ENCODE measurements at regions of chr11 and their contacts with region 1.

Region 1: GRCh38 chr11:122754553-122755322 is 83.6 kb upstream of the CRTAM start:
- DNase-seq: peak in 7 of 9 donors; percentile 27 to 63 (median 54)
- ATAC-seq: peak; percentile 57
- H3K4me3 ChIP-seq: no peak overlapping the region
- H3K4me3 Mint-ChIP-seq: peak overlapping the region in 6 of 10 donors; percentile 0 to 38 (median 26)
- H3K27ac ChIP-seq: no peak overlapping the region
- H3K27ac Mint-ChIP-seq: peak overlapping the region in 5 of 9 donors; percentile 43 to 79 (median 60)
- H3K4me1 ChIP-seq: peaks cover 11 to 27% of the 10 kb centered on the region in 2 donors
- H3K4me1 Mint-ChIP-seq: peaks cover 23 to 87% (median 68%) of the 10 kb centered on the region in 7 donors
- H3K27me3 ChIP-seq: no peaks in the 10 kb centered on the region
- H3K27me3 Mint-ChIP-seq: peaks cover 0 to 11% (median 0%) of the 10 kb centered on the region in 5 donors

Region 2: DNA sequence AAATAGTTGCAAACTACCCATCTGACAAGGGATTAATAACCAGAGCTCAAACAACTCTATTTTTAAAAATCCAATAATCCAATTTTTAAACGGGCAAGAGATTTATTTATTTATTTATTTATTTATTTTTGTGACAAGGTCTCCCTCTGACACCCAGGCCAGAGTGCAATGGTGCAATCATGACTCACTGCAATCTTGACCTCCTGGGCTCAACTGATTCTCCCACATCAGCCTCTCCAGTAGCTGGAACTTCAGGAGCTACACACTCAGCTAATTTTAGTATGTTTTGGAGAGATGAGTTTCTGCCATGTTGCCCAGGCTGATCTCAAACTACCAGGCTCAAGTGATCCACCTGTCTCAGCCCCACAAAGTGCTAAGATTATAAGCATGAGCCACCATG is 371.6 kb before region 1 on chr11:
- CTCF ChIA-PET with region 1: no interaction called
- POLR2A ChIA-PET with region 1: no interaction called
- intact Hi-C with region 1: no loop called
- DNase-seq: no peak
- ATAC-seq: no peak
- H3K4me3 ChIP-seq: no peak overlapping the region
- H3K4me3 Mint-ChIP-seq: no peak overlapping the region
- H3K27ac ChIP-seq: no peak overlapping the region
- H3K27ac Mint-ChIP-seq: no peak overlapping the region
- H3K4me1 ChIP-seq: no peaks in the 10 kb centered on the region
- H3K4me1 Mint-ChIP-seq: peaks cover 0 to 2% (median 0%) of the 10 kb centered on the region in 7 donors
- H3K27me3 ChIP-seq: no peaks in the 10 kb centered on the region
- H3K27me3 Mint-ChIP-seq: peaks cover 0 to 4% (median 0%) of the 10 kb centered on the region in 5 donors

Region 3: GRCh38 chr11:122578168-122578825 is 176.4 kb before region 1 on chr11:
- CTCF ChIA-PET with region 1: interaction called, 4 read pairs
- POLR2A ChIA-PET with region 1: interaction called, 3 read pairs
- intact Hi-C with region 1: loop called (anchors 1 kb)
- DNase-seq: no peak
- ATAC-seq: no peak
- H3K4me3 ChIP-seq: no peak overlapping the region
- H3K4me3 Mint-ChIP-seq: no peak overlapping the region
- H3K27ac ChIP-seq: no peak overlapping the region
- H3K27ac Mint-ChIP-seq: no peak overlapping the region
- H3K4me1 ChIP-seq: no peaks in the 10 kb centered on the region
- H3K4me1 Mint-ChIP-seq: peaks cover 5 to 17% (median 11%) of the 10 kb centered on the region in 7 donors
- H3K27me3 ChIP-seq: no peaks in the 10 kb centered on the region
- H3K27me3 Mint-ChIP-seq: peaks cover 0 to 7% (median 0%) of the 10 kb centered on the region in 5 donors

Region 4: DNA sequence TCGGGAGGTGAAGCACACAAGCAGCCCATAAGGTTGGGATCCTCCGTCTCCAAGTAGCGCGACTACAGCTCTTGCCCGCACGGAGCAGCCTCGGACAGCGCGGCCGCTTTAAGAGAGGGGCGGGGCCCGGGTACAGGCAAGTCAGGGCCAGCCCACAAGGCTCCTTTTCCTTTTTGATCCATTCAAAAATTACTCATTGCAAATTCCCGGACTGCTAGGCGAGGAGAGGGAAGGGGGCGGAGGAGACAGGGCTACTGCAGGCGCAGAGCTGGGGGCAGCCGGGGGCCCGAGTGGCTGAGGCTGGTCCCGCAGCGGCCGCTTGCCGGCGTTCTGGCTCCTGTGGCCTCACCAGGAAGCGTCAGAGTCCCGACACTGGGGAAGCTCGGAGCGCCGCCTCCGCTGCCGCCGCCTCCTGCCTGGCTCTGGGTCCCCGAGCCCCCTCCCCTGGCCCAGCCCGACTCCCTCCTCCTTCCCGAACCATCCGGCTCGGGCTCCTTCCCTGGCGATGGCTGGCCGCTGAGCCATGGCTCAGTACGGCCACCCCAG is 99.1 kb before region 1 on chr11 and contains the start of gene UBASH3B:
- CTCF ChIA-PET with region 1: interaction called, 80 read pairs
- POLR2A ChIA-PET with region 1: interaction called, 34 read pairs
- intact Hi-C with region 1: loop called (anchors 1 kb)
- DNase-seq: peak; percentile 49 to 65 (median 62)
- ATAC-seq: peak; percentile 82
- H3K4me3 ChIP-seq: peak within 1 kb of the TSS; percentile 68
- H3K4me3 Mint-ChIP-seq: peak within 1 kb of the TSS; percentile 91 to 99 (median 98)
- H3K27ac ChIP-seq: peak within 1 kb of the TSS; percentile 83
- H3K27ac Mint-ChIP-seq: peak within 1 kb of the TSS; percentile 73 to 97 (median 94)
- H3K4me1 ChIP-seq: peaks cover 4 to 29% of the 10 kb centered on the region in 2 donors
- H3K4me1 Mint-ChIP-seq: peaks cover 18 to 50% (median 43%) of the 10 kb centered on the region in 7 donors
- H3K27me3 ChIP-seq: no peaks in the 10 kb centered on the region
- H3K27me3 Mint-ChIP-seq: peaks cover 0 to 60% (median 0%) of the 10 kb centered on the region in 5 donors
- total RNA-seq, gene UBASH3B: 10.4 to 49.8 (median 43.2) TPM

Region 5: GRCh38 chr11:122668562-122669090 is 86.1 kb before region 1 on chr11:
- CTCF ChIA-PET with region 1: interaction called, 29 read pairs
- POLR2A ChIA-PET with region 1: interaction called, 19 read pairs
- intact Hi-C with region 1: loop called in 1 of 2 experiments (anchors 1 kb)
- DNase-seq: peak in 6 of 9 donors; percentile 22 to 68 (median 52)
- ATAC-seq: peak; percentile 47
- H3K4me3 ChIP-seq: no peak overlapping the region
- H3K4me3 Mint-ChIP-seq: peak overlapping the region; percentile 9 to 77 (median 62)
- H3K27ac ChIP-seq: peak overlapping the region; percentile 55
- H3K27ac Mint-ChIP-seq: peak overlapping the region in 8 of 9 donors; percentile 79 to 99 (median 90)
- H3K4me1 ChIP-seq: peaks cover 45 to 53% of the 10 kb centered on the region in 2 donors
- H3K4me1 Mint-ChIP-seq: peaks cover 36 to 91% (median 77%) of the 10 kb centered on the region in 7 donors
- H3K27me3 ChIP-seq: no peaks in the 10 kb centered on the region
- H3K27me3 Mint-ChIP-seq: peaks cover 0 to 9% (median 0%) of the 10 kb centered on the region in 5 donors

Region 6: GRCh38 chr11:122697636-122698167 is 57.0 kb before region 1 on chr11:
- CTCF ChIA-PET with region 1: interaction called, 32 read pairs
- POLR2A ChIA-PET with region 1: interaction called, 99 read pairs
- intact Hi-C with region 1: loop called (anchors 1 to 2 kb)
- DNase-seq: peak in 7 of 9 donors; percentile 53 to 78 (median 69)
- ATAC-seq: peak; percentile 85
- H3K4me3 ChIP-seq: peak overlapping the region; percentile 33
- H3K4me3 Mint-ChIP-seq: peak overlapping the region; percentile 61 to 93 (median 82)
- H3K27ac ChIP-seq: peak overlapping the region; percentile 75
- H3K27ac Mint-ChIP-seq: peak overlapping the region; percentile 88 to 99 (median 96)
- H3K4me1 ChIP-seq: peaks cover 34 to 62% of the 10 kb centered on the region in 2 donors
- H3K4me1 Mint-ChIP-seq: peaks cover 53 to 99% (median 88%) of the 10 kb centered on the region in 7 donors
- H3K27me3 ChIP-seq: no peaks in the 10 kb centered on the region
- H3K27me3 Mint-ChIP-seq: peaks cover 0 to 3% (median 0%) of the 10 kb centered on the region in 5 donors

Region 7: GRCh38 chr11:122727101-122727929 is 27.4 kb before region 1 on chr11:
- CTCF ChIA-PET with region 1: interaction called, 15 read pairs
- POLR2A ChIA-PET with region 1: interaction called, 3 read pairs
- intact Hi-C with region 1: loop called in 1 of 2 experiments (anchors 1 kb)
- DNase-seq: peak in 7 of 9 donors; percentile 33 to 56 (median 48)
- ATAC-seq: peak; percentile 77
- H3K4me3 ChIP-seq: peak overlapping the region; percentile 37
- H3K4me3 Mint-ChIP-seq: peak overlapping the region; percentile 79 to 95 (median 85)
- H3K27ac ChIP-seq: peak overlapping the region; percentile 81
- H3K27ac Mint-ChIP-seq: peak overlapping the region; percentile 88 to 100 (median 97)
- H3K4me1 ChIP-seq: peaks cover 20 to 64% of the 10 kb centered on the region in 2 donors
- H3K4me1 Mint-ChIP-seq: peaks cover 53 to 73% (median 66%) of the 10 kb centered on the region in 7 donors
- H3K27me3 ChIP-seq: no peaks in the 10 kb centered on the region
- H3K27me3 Mint-ChIP-seq: no peaks in the 10 kb centered on the region

Region 8: GRCh38 chr11:122772945-122773344 is 18.2 kb after region 1 on chr11:
- CTCF ChIA-PET with region 1: interaction called, 15 read pairs
- POLR2A ChIA-PET with region 1: interaction called, 4 read pairs
- intact Hi-C with region 1: no loop called
- DNase-seq: no peak
- ATAC-seq: no peak
- H3K4me3 ChIP-seq: no peak overlapping the region
- H3K4me3 Mint-ChIP-seq: no peak overlapping the region
- H3K27ac ChIP-seq: no peak overlapping the region
- H3K27ac Mint-ChIP-seq: no peak overlapping the region
- H3K4me1 ChIP-seq: no peaks in the 10 kb centered on the region
- H3K4me1 Mint-ChIP-seq: peaks cover 2 to 79% (median 61%) of the 10 kb centered on the region in 7 donors
- H3K27me3 ChIP-seq: no peaks in the 10 kb centered on the region
- H3K27me3 Mint-ChIP-seq: peaks cover 0 to 10% (median 0%) of the 10 kb centered on the region in 5 donors

Measured in naive thymus-derived CD4-positive, alpha-beta T cell (primary cell).